PC-9 (cell line): ENCODE measurements at regions of chr9 and their contacts with region 1.

Region 1: DNA sequence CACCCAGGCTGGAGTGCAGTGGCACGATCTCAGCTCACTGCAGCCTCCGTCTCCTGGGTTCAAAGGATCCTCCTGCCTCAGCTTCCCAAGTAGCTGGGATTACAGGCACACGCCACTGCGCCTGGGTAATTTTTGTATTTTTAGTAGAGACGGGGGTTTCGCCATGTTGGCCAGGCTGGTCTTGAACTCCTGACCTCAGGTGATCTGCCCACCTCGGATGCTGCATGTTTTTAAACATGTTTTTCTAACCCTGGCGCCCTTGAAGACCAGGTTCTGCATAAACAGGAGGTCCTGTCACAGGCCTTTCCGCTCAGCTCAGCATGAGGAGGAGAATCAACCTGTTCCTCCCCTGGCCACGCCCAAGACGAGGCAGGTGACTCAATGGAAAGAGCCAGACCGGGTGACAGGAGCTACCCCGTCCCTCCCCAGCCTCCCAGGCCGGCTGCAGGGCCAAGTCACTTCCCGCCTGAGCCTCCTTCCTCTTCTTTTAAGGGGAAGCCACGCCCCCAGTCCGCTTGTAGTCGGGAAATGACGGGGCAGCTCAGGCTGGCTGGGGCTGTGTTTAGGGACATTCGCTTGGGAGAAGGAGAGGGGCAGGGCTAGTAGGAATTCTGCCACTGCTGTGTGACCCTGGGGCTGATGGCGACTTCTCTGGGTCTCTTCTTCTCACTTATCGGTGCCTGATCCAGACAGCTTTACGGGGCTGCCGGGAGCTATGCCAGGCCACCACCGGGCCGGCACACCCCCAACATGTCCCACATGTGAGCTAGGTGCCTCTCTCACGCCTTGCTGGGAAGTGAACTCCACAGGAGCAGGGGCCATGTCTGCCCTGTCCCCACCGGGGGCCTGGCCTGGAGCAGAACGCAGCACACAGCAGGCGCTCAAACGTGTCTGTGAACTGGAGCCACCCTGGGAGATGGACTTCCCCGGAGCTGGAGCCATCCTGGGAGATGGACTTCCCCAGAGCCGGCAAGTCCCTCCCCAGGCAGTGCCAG is 6.1 kb downstream of the NOTCH1 start:
- DNase-seq: peak; percentile 88 to 97
- H3K4me3 ChIP-seq: no peak overlapping the region
- H3K27ac ChIP-seq: peak overlapping the region; percentile 42; the same call in 1 of the 2 replicates
- H3K4me1 ChIP-seq: peaks cover 20% of the 10 kb centered on the region
- H3K27me3 ChIP-seq: no peaks in the 10 kb centered on the region
- CTCF ChIP-seq: no peak

Region 2: GRCh38 chr9:136527721-136528691 is 11.7 kb before region 1 on chr9:
- CTCF ChIA-PET with region 1: no interaction called
- POLR2A ChIA-PET with region 1: interaction called, 21 read pairs
- intact Hi-C with region 1: no loop called
- DNase-seq: no peak
- H3K4me3 ChIP-seq: no peak overlapping the region
- H3K27ac ChIP-seq: no peak overlapping the region
- H3K4me1 ChIP-seq: no peaks in the 10 kb centered on the region
- H3K27me3 ChIP-seq: no peaks in the 10 kb centered on the region
- CTCF ChIP-seq: no peak

Region 3: GRCh38 chr9:136558373-136558772 is 18.6 kb after region 1 on chr9:
- CTCF ChIA-PET with region 1: no interaction called
- POLR2A ChIA-PET with region 1: interaction called, 3 read pairs
- intact Hi-C with region 1: loop called (anchors 2 kb)
- DNase-seq: peak in 1 of 2 experiments; percentile 71
- H3K4me3 ChIP-seq: peak overlapping the region; percentile 15; the same call in 1 of the 2 replicates
- H3K27ac ChIP-seq: peak overlapping the region; percentile 94
- H3K4me1 ChIP-seq: peaks cover 25% of the 10 kb centered on the region
- H3K27me3 ChIP-seq: no peaks in the 10 kb centered on the region
- CTCF ChIP-seq: no peak

Region 4: DNA sequence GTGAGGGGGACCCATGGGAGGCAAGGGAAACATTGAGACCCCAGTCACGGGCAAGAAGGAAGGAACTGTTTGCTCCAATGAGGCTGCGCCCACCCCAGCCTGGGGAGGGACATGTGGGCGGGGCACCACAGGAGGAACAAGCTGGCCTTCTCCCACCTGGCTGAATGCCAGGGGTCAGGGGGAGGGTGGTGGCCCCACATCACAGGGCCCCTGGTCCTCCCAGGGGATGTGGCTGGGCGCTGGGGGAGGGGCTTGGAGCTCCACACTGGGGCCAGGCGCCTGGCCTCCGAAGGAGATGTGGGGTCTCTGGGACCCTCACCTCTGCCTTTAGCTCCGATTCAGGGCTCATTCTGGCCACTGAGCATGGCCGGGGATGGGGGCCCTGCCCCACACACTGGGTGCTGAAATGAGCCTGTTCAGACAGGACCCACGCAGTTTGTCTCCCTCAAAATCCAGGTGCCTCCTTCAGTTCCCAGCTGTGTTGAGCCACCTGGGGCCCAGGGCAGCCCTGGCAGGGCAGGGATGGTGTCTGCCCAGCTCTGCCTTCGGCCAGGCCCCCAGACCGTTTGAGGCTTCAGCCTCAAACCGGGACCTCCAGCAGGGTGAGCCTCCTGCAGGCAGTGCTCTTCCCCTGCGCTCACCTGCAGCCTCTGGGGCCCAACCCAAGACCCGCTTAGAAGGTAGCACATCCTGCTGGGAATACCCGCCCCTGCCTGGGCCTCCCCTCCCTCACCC is 39.4 kb after region 1 on chr9:
- CTCF ChIA-PET with region 1: no interaction called
- POLR2A ChIA-PET with region 1: interaction called, 13 read pairs
- intact Hi-C with region 1: loop called (anchors 1 kb)
- DNase-seq: peak in 1 of 2 experiments; percentile 34
- H3K4me3 ChIP-seq: no peak overlapping the region; the same call in 1 of the 2 replicates
- H3K27ac ChIP-seq: peak overlapping the region; percentile 70; the same call in 1 of the 2 replicates
- H3K4me1 ChIP-seq: peaks cover 26% of the 10 kb centered on the region
- H3K27me3 ChIP-seq: no peaks in the 10 kb centered on the region
- CTCF ChIP-seq: no peak

Region 5: DNA sequence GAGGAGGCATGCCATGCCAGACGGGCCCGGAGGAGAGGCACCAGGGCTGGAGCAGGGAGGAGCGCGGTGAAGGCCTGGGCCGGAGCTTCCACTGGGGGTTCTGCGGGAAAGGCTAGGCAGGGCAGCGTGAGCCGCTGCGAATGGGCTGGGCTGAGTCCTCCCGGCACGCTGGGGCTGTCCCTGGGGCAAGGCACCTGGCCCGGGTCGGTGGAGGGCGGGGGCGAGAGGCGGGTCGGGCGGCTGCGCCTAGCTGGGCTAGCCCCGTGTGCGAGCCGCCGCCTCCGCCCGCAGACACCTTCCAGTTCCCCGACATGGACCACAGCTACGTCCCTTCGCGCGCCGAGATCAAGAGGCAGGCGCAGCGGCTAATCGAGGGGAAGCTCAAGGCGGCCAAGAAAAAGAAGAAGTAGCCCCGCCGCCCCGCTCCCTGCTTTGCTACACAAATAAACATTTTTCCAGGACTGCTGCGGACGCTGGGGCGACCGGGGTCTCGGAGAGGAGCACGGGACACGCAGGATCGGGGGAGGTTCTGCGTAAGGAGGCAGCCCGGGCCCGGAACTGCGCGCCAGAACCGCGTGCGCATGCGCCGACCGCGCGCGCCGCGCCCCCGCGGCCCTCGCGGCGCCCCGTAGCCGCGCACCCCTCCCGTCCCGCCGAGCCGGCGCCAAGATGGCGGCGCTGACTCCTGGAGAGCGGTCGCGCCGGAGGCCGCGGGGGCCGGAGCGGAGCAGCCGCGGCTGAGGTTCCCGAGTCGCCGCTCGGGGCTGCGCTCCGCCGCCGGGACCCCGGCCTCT is 267.8 kb after region 1 on chr9 and contains the start of gene RABL6:
- CTCF ChIA-PET with region 1: no interaction called
- POLR2A ChIA-PET with region 1: no interaction called
- intact Hi-C with region 1: no loop called
- DNase-seq: peak in 1 of 2 experiments; percentile 84
- H3K4me3 ChIP-seq: peak within 1 kb of the TSS; percentile 96
- H3K27ac ChIP-seq: 0 out of 2 replicates have a peak within 1 kb of the TSS, but pooled peaks have one; percentile 19
- H3K4me1 ChIP-seq: peaks cover 19% of the 10 kb centered on the region
- H3K27me3 ChIP-seq: no peaks in the 10 kb centered on the region
- CTCF ChIP-seq: no peak
- total RNA-seq, gene RABL6: 116 and 136 TPM in 2 replicates

Region 6: DNA sequence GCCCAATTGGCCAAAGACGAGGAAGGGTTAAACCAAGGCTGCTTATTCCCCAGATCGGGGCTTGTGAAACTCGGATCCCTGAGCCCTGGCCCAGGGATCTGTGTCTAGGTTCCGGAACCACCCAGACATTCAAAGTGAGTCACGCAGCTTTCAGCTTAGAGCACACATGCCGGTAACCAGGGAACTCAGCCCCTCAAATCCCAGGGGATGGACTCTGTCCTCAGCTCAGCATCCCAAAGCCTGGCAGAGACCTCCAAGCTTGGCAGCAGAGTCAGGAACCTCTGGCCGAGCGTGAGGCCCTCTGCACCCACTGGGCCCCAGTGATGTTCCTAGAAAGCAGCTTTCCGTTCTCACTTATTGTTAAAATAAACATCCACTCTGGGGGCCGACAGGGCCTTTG is 1005.4 kb after region 1 on chr9:
- CTCF ChIA-PET with region 1: no interaction called
- POLR2A ChIA-PET with region 1: no interaction called
- intact Hi-C with region 1: no loop called
- DNase-seq: no peak
- H3K4me3 ChIP-seq: no peak overlapping the region
- H3K27ac ChIP-seq: no peak overlapping the region
- H3K4me1 ChIP-seq: peaks cover 7% of the 10 kb centered on the region
- H3K27me3 ChIP-seq: peaks cover 22% of the 10 kb centered on the region; the same call in 1 of the 2 replicates
- CTCF ChIP-seq: no peak